Activated naive CD4-positive, alpha-beta T cell treated with anti-CD3 and anti-CD28 coated beads for 36 hours (primary cell): ENCODE measurements at regions of chr1 and their contacts with region 1.

Region 1: DNA sequence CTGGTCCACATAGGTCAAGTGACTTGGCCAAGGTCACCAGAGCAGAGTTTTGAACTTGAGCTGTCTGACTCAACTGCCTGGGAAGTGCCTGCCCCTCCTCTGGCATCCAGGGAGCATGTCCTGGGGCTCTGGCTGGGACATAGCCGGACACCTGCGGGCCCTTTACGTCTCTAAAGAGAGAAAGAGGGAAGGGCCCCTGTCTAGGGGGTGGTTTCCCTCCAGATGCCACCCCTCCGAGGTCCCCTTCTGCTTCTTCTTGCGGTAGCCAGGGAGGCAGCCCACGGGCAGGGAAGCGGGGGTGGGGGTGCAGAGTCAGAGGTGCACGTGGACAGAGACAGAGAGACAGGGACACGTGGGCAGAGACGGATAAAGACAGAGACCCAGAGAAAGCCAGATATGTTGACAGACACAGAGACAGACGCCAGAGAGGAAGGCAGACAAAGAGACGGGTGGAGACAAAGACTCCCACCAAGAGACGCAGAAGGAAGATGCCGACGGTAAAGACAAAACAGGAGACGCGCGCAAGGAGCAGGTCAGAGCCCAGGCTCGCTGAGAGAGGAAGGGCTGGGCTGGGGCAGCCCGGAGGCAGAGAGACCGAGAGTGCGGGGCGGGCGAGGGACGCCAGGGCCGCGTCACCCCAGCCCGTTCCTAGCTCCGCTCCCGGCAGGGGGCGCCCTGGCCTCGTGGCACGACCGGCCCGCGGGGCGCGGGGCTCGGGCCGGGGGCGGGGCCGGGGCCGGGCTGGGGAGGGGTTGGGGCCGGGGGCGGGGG is 458 bp upstream of the ALPL start:
- DNase-seq: peak; percentile 75
- H3K4me3 Mint-ChIP-seq: peak overlapping the region; percentile 45
- H3K27ac Mint-ChIP-seq: no peak overlapping the region
- H3K4me1 Mint-ChIP-seq: peaks cover 5% of the 10 kb centered on the region
- H3K27me3 Mint-ChIP-seq: peaks cover 54% of the 10 kb centered on the region

Region 2: DNA sequence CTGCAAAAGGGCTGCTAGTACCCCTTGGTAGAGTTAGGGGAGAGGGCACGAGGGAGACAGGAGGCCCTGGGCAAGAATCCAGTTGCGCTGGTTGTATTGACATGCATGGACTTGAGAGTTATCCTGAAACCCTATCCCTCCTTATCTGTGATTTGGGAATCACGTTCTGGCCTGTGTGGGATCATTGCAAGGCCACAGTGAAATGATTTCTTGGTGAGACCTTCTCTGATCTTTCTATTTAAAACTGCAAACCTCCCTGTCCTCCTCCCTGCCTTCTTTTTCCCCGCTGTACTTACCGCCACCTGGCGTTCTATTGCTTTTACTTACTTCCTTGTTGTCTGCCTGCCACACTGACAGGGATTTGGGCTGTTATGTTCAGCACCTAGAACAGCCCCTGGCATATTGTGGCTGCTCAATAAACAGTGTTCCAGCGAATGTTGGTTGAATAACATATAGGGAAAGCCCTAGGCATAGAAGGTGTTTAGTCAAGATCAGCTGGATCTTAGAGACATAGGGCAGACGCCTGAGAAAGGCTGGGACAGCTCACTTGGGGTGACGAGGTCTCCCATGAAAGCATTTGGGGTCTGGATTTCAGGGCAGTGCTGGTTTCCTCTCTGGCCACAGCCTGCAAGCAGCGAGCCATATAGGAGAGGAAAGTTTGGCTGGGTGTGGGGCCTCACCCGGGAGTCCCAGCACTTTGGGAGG is 26.1 kb after region 1 on chr1:
- CTCF ChIA-PET with region 1: interaction called, 21 read pairs
- intact Hi-C with region 1: no loop called
- DNase-seq: peak; percentile 52
- H3K4me3 Mint-ChIP-seq: no peak overlapping the region
- H3K27ac Mint-ChIP-seq: no peak overlapping the region
- H3K4me1 Mint-ChIP-seq: no peaks in the 10 kb centered on the region
- H3K27me3 Mint-ChIP-seq: peaks cover 23% of the 10 kb centered on the region

Region 3: GRCh38 chr1:21594935-21595897 is 86.5 kb after region 1 on chr1:
- CTCF ChIA-PET with region 1: interaction called, 3 read pairs
- intact Hi-C with region 1: loop called (anchors 5 kb)
- DNase-seq: peak; percentile 80
- H3K4me3 Mint-ChIP-seq: no peak overlapping the region
- H3K27ac Mint-ChIP-seq: no peak overlapping the region
- H3K4me1 Mint-ChIP-seq: peaks cover 4% of the 10 kb centered on the region
- H3K27me3 Mint-ChIP-seq: peaks cover 4% of the 10 kb centered on the region

Region 4: GRCh38 chr1:21631944-21632887 is 123.5 kb after region 1 on chr1:
- CTCF ChIA-PET with region 1: no interaction called
- intact Hi-C with region 1: no loop called
- DNase-seq: no peak
- H3K4me3 Mint-ChIP-seq: no peak overlapping the region
- H3K27ac Mint-ChIP-seq: no peak overlapping the region
- H3K4me1 Mint-ChIP-seq: no peaks in the 10 kb centered on the region
- H3K27me3 Mint-ChIP-seq: peaks cover 8% of the 10 kb centered on the region

Region 5: GRCh38 chr1:21659099-21659923 is 150.5 kb after region 1 on chr1:
- CTCF ChIA-PET with region 1: interaction called, 4 read pairs
- intact Hi-C with region 1: loop called (anchors 1 kb)
- DNase-seq: peak; percentile 80
- H3K4me3 Mint-ChIP-seq: peak overlapping the region; percentile 22
- H3K27ac Mint-ChIP-seq: no peak overlapping the region
- H3K4me1 Mint-ChIP-seq: peaks cover 5% of the 10 kb centered on the region
- H3K27me3 Mint-ChIP-seq: peaks cover 20% of the 10 kb centered on the region

Region 6: GRCh38 chr1:21703318-21703963 is 194.7 kb after region 1 on chr1:
- CTCF ChIA-PET with region 1: no interaction called
- intact Hi-C with region 1: no loop called
- DNase-seq: no peak
- H3K4me3 Mint-ChIP-seq: no peak overlapping the region
- H3K27ac Mint-ChIP-seq: no peak overlapping the region
- H3K4me1 Mint-ChIP-seq: peaks cover 4% of the 10 kb centered on the region
- H3K27me3 Mint-ChIP-seq: no peaks in the 10 kb centered on the region

Region 7: GRCh38 chr1:21834094-21834493 is 325.3 kb after region 1 on chr1:
- CTCF ChIA-PET with region 1: no interaction called
- intact Hi-C with region 1: no loop called
- DNase-seq: no peak
- H3K4me3 Mint-ChIP-seq: no peak overlapping the region
- H3K27ac Mint-ChIP-seq: no peak overlapping the region
- H3K4me1 Mint-ChIP-seq: no peaks in the 10 kb centered on the region
- H3K27me3 Mint-ChIP-seq: no peaks in the 10 kb centered on the region

Region 8: DNA sequence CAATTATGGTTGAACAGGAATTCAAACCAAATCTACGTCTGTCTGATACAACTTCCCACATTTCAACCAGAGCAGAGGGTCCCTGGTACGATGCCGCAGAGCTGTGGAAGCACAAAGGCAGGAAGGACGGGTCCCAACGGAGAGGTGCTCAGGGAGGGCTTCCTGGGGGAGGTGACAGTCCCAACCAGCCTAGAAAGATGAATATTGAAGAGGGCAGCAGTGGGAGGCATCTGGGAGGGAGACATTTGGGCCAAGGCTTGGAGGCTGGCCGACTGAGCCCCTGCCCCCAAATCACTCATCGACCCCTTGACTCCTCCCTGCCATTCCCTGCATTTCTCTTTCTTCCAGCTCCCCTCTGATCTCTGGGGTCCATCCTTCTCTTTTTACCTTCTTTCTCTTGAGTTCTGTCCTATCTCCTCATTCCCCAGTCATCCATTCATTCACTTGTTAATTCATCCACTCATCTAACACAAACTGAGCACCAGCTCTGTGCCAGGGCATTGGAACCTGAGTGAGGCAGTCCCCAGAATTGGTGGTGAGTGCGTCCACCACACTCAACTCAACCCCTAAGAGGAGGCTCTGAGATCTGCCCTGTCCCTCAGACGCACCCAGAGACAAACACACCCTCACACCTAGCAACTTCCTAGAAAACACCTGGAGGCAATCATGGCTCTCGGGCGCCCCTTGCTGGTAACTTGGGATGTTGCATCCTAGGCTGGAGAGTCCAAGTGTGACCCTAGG is 454.9 kb after region 1 on chr1:
- CTCF ChIA-PET with region 1: no interaction called
- intact Hi-C with region 1: loop called (anchors 10 kb)
- DNase-seq: peak; percentile 94
- H3K4me3 Mint-ChIP-seq: no peak overlapping the region
- H3K27ac Mint-ChIP-seq: peak overlapping the region; percentile 11
- H3K4me1 Mint-ChIP-seq: peaks cover 3% of the 10 kb centered on the region
- H3K27me3 Mint-ChIP-seq: no peaks in the 10 kb centered on the region

Region 9: DNA sequence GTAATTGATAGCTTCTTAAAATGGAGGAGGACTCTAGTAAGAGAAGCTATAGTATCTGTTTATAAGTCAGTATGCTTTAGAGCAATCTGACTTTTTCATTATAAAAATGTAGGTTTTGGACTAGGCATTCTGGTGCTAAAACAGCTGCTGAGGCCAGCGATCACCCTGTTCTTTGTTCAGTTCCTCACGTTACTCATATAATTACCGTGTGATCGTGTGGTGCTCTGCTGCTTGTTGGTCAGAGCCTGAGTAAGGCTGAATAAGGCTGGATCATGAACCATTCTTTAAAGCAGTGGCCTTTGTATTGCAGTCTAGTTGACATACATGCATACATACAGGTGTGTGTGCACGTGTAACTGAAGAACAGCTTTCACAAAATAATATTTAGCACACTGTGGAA is 569.0 kb after region 1 on chr1:
- CTCF ChIA-PET with region 1: no interaction called
- intact Hi-C with region 1: no loop called
- DNase-seq: no peak
- H3K4me3 Mint-ChIP-seq: no peak overlapping the region
- H3K27ac Mint-ChIP-seq: peak overlapping the region; percentile 42
- H3K4me1 Mint-ChIP-seq: peaks cover 85% of the 10 kb centered on the region
- H3K27me3 Mint-ChIP-seq: no peaks in the 10 kb centered on the region